ENCODE measurements at regions of chr15 and their contacts with region 1.

Region 1: GRCh38 chr15:82809404-82810060 is at the start of gene WHAMM:
- DNase-seq: peak; percentile 97
- H3K4me3 Mint-ChIP-seq: peak within 1 kb of the TSS; percentile 87
- H3K27ac Mint-ChIP-seq: peak within 1 kb of the TSS; percentile 86
- H3K4me1 Mint-ChIP-seq: peaks cover 26% of the 10 kb centered on the region
- H3K27me3 Mint-ChIP-seq: no peaks in the 10 kb centered on the region
- total RNA-seq, gene WHAMM: 3.7 to 5.7 TPM

Region 2: GRCh38 chr15:82540055-82540983 is 269.2 kb before region 1 on chr15 and contains the start of gene RPS17:
- CTCF ChIA-PET with region 1: no interaction called
- intact Hi-C with region 1: loop called (anchors 1 kb)
- DNase-seq: peak; percentile 96
- H3K4me3 Mint-ChIP-seq: peak within 1 kb of the TSS; percentile 85
- H3K27ac Mint-ChIP-seq: peak within 1 kb of the TSS; percentile 96
- H3K4me1 Mint-ChIP-seq: peaks cover 34% of the 10 kb centered on the region
- H3K27me3 Mint-ChIP-seq: no peaks in the 10 kb centered on the region
- total RNA-seq, gene RPS17: 3,025 to 3,069 TPM

Region 3: GRCh38 chr15:82566690-82567089 is 242.8 kb before region 1 on chr15:
- CTCF ChIA-PET with region 1: no interaction called
- intact Hi-C with region 1: no loop called
- DNase-seq: no peak
- H3K4me3 Mint-ChIP-seq: no peak overlapping the region
- H3K27ac Mint-ChIP-seq: no peak overlapping the region
- H3K4me1 Mint-ChIP-seq: no peaks in the 10 kb centered on the region
- H3K27me3 Mint-ChIP-seq: no peaks in the 10 kb centered on the region

Region 4: DNA sequence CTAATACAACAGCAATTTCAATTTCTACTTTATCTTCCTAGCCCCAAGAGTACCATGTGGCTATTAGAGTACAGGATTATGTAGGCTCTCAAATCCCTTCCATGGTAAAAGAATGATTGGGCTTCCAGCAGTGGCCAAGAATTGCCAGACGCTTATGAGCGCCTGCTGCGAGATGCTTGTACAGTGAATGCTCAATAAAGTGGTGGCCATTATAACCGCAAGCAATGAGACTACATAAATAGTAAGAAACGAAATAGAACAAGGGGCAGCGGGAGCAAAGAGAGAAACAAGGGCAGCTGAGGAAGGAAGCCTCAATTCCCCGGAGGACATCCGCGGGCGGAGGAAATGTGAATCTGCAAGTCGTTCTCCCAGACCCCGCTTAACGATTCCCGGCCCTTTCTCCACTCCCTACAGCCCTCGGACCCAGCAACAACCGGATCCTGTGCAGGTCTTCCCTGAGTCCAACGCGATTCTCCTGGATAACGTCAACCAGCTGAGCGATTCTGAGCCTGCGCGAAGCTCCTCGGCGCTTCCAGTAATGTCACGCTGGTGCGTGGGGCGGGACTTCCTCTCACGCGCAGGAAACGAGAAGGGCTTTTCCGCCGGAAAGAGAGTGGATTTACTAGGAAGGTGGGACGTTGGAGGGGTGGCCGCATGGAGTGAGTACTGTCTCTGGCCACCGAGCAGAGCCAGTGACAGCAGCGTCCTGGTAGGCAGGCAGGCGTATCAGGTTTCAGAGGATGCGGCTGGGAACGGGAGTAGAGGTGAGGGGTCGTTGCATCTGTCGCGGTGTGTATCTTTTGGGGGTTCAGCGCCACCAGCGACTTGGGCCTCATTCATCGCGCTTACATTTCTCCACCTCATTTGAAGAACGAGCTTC is 59.3 kb before region 1 on chr15:
- CTCF ChIA-PET with region 1: no interaction called
- intact Hi-C with region 1: loop called (anchors 1 kb)
- DNase-seq: peak; percentile 90
- H3K4me3 Mint-ChIP-seq: peak overlapping the region; percentile 99
- H3K27ac Mint-ChIP-seq: peak overlapping the region; percentile 94
- H3K4me1 Mint-ChIP-seq: peaks cover 45% of the 10 kb centered on the region
- H3K27me3 Mint-ChIP-seq: no peaks in the 10 kb centered on the region

Region 5: GRCh38 chr15:82985688-82986441 is 176.3 kb after region 1 on chr15 and contains the start of gene RAMAC:
- CTCF ChIA-PET with region 1: interaction called, 4 read pairs
- intact Hi-C with region 1: loop called (anchors 1 kb)
- DNase-seq: peak; percentile 96
- H3K4me3 Mint-ChIP-seq: peak within 1 kb of the TSS; percentile 96
- H3K27ac Mint-ChIP-seq: peak within 1 kb of the TSS; percentile 94
- H3K4me1 Mint-ChIP-seq: peaks cover 25% of the 10 kb centered on the region
- H3K27me3 Mint-ChIP-seq: no peaks in the 10 kb centered on the region
- total RNA-seq, gene RAMAC: 15.3 to 15.6 TPM

Region 6: DNA sequence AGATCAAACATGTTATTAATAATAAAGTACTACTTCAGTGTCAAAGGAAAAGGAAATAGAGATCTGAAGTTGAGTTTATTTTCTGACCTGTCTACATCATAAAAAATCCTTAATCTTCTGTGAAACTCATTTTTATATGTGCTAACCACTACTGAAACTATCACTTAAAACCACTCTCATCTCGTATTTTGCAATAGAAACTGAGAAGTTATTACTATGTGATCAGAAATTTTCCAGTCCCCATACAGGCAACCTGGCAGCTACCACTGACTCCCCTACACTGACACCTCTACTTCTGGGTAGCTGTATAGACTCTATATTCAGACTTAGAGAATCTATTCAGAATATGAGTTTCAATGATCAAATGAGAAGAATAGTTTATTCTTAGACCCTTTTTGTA is 389.8 kb after region 1 on chr15:
- CTCF ChIA-PET with region 1: no interaction called
- intact Hi-C with region 1: loop called (anchors 2 kb)
- DNase-seq: peak; percentile 34
- H3K4me3 Mint-ChIP-seq: no peak overlapping the region
- H3K27ac Mint-ChIP-seq: no peak overlapping the region
- H3K4me1 Mint-ChIP-seq: peaks cover 19% of the 10 kb centered on the region
- H3K27me3 Mint-ChIP-seq: peaks cover 28% of the 10 kb centered on the region

Measured in activated naive CD4-positive, alpha-beta T cell treated with anti-CD3 and anti-CD28 coated beads for 36 hours (primary cell).